SK-N-SH (cell line): ENCODE measurements at regions of chr5 and their contacts with region 1.

Region 1: DNA sequence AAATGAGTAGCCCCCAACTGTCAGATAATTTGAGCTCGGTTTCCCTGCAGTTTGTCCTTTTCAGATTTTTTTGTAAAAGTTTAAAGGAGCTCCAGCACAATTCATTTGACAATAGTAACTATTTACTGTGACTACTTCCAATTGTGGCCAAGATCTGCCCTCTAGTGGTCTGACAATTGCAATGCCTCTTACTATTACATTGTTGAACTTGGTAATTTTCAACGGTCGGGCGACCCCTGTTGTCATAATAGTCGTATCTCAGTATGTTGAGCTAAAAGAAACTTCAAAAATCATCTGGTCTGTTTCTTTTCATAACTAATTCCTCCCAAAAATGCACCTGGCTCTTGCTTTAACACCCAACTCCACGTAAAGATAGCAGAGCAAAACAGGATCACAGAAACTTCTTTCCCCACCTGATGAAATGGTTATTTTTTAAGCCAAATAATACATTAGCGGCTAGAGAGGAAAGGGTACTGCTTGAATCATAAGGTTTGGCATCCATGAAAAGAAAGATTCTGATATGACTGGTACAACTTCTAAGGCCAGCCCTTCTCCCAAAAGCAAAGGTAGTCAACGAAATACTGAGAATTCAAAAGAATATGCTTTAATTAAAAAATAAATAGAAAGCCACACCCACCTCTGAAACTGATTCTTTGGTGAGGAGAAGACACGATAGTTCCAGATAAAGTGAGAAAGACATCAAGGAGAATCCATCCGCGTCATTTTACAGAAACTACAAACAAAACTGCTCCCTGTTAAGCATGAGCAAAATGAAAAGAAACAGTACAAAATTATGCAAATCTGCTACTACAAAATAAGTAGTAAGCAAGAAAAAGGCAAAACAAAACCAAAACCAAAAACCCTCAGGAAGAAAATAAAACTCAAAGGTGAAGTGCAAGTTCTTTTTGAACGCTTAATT is 76.9 kb upstream of the HTR4 start:
- DNase-seq: peak; percentile 52
- H3K4me3 ChIP-seq: no peak overlapping the region; a peak in 1 of 4 replicates
- H3K27ac ChIP-seq: peak overlapping the region in 1 of 2 experiments; percentile 56; a peak in 2 of 4 replicates
- H3K4me1 ChIP-seq: peaks cover 0 to 15% of the 10 kb centered on the region in 2 experiments; a peak in 3 of 4 replicates
- H3K27me3 ChIP-seq: no peaks in the 10 kb centered on the region
- CTCF ChIP-seq: peak; percentile 99
- EP300 ChIP-seq: no peak
- RAD21 ChIP-seq: peak; percentile 99

Region 2: GRCh38 chr5:148166550-148167283 is 564.5 kb before region 1 on chr5:
- CTCF ChIA-PET with region 1: interaction called, 13 read pairs
- POLR2A ChIA-PET with region 1: no interaction called
- DNase-seq: no peak
- H3K4me3 ChIP-seq: no peak overlapping the region
- H3K27ac ChIP-seq: no peak overlapping the region
- H3K4me1 ChIP-seq: no peaks in the 10 kb centered on the region
- H3K27me3 ChIP-seq: no peaks in the 10 kb centered on the region
- CTCF ChIP-seq: no peak
- EP300 ChIP-seq: no peak
- RAD21 ChIP-seq: no peak

Region 3: DNA sequence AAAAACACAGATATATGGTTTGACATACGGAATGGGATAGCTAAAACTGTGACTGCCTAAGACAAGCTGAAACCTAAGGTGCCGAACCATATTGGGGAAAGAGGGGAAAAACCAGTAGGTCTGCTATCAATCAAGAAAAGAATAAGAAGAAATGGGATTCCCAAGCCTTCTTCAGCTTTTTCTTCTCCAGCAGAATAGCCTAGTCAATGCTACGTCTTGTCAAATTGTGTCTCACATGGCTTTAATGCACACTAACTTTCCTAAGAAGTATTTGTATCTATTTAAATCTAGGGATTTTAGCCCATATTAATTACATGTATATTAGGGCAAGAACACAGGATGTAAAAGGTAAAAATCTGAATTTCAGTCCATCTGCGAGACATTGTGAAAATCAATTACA is 348.2 kb before region 1 on chr5:
- CTCF ChIA-PET with region 1: interaction called, 18 read pairs
- POLR2A ChIA-PET with region 1: no interaction called
- DNase-seq: no peak
- H3K4me3 ChIP-seq: peak overlapping the region; percentile 87 to 95
- H3K27ac ChIP-seq: peak overlapping the region; percentile 72 to 82; a peak in 3 of 4 replicates
- H3K4me1 ChIP-seq: peaks cover 8 to 19% of the 10 kb centered on the region in 2 experiments; a peak in 3 of 4 replicates
- H3K27me3 ChIP-seq: no peaks in the 10 kb centered on the region
- CTCF ChIP-seq: no peak
- EP300 ChIP-seq: no peak
- RAD21 ChIP-seq: no peak

Region 4: GRCh38 chr5:148476302-148476701 is 254.9 kb before region 1 on chr5:
- CTCF ChIA-PET with region 1: interaction called, 14 read pairs
- POLR2A ChIA-PET with region 1: no interaction called
- DNase-seq: no peak
- H3K4me3 ChIP-seq: no peak overlapping the region
- H3K27ac ChIP-seq: no peak overlapping the region
- H3K4me1 ChIP-seq: no peaks in the 10 kb centered on the region
- H3K27me3 ChIP-seq: no peaks in the 10 kb centered on the region
- CTCF ChIP-seq: no peak
- EP300 ChIP-seq: no peak
- RAD21 ChIP-seq: no peak

Region 5: GRCh38 chr5:148632255-148633066 is 98.7 kb before region 1 on chr5:
- CTCF ChIA-PET with region 1: interaction called, 16 read pairs
- POLR2A ChIA-PET with region 1: no interaction called
- DNase-seq: no peak
- H3K4me3 ChIP-seq: no peak overlapping the region
- H3K27ac ChIP-seq: no peak overlapping the region
- H3K4me1 ChIP-seq: peaks cover 0 to 6% of the 10 kb centered on the region in 2 experiments; a peak in 2 of 4 replicates
- H3K27me3 ChIP-seq: no peaks in the 10 kb centered on the region
- CTCF ChIP-seq: no peak
- EP300 ChIP-seq: no peak
- RAD21 ChIP-seq: no peak

Region 6: DNA sequence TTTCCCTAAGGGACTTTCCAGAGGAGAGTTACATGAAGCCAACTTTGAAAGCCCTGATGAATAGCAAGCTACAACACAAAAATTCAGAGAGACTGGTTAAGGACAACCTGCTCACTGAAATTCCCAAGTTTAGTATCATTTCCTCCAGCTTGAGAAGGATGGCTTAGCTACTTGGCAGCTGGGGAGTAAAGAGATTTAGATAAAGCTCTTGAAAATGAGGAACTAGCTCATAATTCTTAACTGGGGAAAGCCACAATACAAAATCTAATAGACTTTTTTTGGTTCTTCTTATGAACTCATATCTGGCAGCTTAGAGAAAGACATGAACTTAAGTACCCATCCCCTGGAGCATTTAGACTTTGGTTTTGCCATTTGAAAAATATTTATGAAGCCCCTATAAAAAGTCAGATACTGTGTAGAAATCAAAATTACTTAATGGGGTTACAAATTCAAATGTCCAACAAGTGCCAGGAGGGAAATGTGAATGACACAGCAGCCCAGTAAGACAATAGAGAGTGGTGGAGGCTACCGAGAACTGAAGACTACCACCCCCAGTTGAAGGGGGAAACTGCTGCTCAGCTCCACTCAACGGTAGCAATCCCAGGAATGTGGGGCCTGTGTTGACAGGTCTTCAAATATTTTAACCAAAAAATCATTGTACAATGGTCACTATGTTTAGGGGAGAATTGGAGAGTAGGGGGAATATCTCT is 15.8 kb after region 1 on chr5:
- CTCF ChIA-PET with region 1: interaction called, 79 read pairs
- POLR2A ChIA-PET with region 1: no interaction called
- DNase-seq: no peak
- H3K4me3 ChIP-seq: no peak overlapping the region
- H3K27ac ChIP-seq: no peak overlapping the region
- H3K4me1 ChIP-seq: no peaks in the 10 kb centered on the region
- H3K27me3 ChIP-seq: no peaks in the 10 kb centered on the region
- CTCF ChIP-seq: no peak
- EP300 ChIP-seq: no peak
- RAD21 ChIP-seq: no peak

Region 7: GRCh38 chr5:148853868-148854267 is 122.7 kb after region 1 on chr5:
- CTCF ChIA-PET with region 1: no interaction called
- POLR2A ChIA-PET with region 1: no interaction called
- DNase-seq: no peak
- H3K4me3 ChIP-seq: no peak overlapping the region
- H3K27ac ChIP-seq: no peak overlapping the region
- H3K4me1 ChIP-seq: no peaks in the 10 kb centered on the region
- H3K27me3 ChIP-seq: no peaks in the 10 kb centered on the region
- CTCF ChIP-seq: no peak
- EP300 ChIP-seq: no peak
- RAD21 ChIP-seq: no peak

Region 8: DNA sequence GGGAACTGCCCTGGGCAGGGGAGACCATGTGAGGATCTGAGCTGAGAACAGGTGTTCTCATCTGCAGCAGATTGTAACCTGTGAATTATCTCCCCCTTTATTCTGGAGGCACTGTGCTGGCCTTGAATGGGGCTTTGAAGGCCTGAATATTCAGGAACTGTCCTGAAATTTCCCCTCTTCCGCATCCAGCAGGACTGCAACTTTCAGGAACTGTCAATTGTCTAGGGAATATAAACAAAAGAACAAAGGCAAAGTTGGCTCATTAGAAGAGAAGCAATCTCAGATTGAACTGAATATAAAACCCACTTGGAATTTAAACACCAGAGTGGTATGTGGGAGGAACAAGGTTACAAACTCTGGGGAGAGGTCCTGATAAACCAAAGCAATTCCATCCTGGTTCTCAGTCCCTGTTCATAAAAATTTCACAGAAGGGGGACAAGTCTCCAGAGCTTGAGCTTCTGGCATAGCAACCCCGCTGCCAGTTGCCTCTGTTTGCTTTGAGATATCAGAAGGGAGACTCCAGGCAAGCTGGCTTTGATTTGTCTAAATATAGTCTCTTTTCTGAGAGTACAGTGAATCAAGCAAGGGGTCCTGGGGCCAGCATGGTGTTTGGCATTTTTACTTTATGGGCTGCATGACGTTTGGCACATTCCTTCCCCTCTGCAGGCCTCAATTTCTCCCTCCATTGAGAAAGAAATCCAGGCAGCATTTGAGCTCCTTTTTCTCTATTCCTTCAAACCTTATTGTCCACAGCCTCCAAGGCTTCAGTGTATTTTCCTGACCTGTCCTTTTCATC is 142.7 kb after region 1 on chr5:
- CTCF ChIA-PET with region 1: no interaction called
- POLR2A ChIA-PET with region 1: no interaction called
- DNase-seq: no peak
- H3K4me3 ChIP-seq: no peak overlapping the region
- H3K27ac ChIP-seq: no peak overlapping the region
- H3K4me1 ChIP-seq: no peaks in the 10 kb centered on the region
- H3K27me3 ChIP-seq: no peaks in the 10 kb centered on the region
- CTCF ChIP-seq: no peak
- EP300 ChIP-seq: no peak
- RAD21 ChIP-seq: no peak

Region 9: GRCh38 chr5:149011074-149011476 is 279.9 kb after region 1 on chr5:
- CTCF ChIA-PET with region 1: interaction called, 14 read pairs
- POLR2A ChIA-PET with region 1: no interaction called
- DNase-seq: no peak
- H3K4me3 ChIP-seq: no peak overlapping the region
- H3K27ac ChIP-seq: no peak overlapping the region
- H3K4me1 ChIP-seq: peaks cover 0 to 2% of the 10 kb centered on the region in 2 experiments; a peak in 2 of 4 replicates
- H3K27me3 ChIP-seq: no peaks in the 10 kb centered on the region
- CTCF ChIP-seq: no peak
- EP300 ChIP-seq: no peak
- RAD21 ChIP-seq: no peak

Region 10: DNA sequence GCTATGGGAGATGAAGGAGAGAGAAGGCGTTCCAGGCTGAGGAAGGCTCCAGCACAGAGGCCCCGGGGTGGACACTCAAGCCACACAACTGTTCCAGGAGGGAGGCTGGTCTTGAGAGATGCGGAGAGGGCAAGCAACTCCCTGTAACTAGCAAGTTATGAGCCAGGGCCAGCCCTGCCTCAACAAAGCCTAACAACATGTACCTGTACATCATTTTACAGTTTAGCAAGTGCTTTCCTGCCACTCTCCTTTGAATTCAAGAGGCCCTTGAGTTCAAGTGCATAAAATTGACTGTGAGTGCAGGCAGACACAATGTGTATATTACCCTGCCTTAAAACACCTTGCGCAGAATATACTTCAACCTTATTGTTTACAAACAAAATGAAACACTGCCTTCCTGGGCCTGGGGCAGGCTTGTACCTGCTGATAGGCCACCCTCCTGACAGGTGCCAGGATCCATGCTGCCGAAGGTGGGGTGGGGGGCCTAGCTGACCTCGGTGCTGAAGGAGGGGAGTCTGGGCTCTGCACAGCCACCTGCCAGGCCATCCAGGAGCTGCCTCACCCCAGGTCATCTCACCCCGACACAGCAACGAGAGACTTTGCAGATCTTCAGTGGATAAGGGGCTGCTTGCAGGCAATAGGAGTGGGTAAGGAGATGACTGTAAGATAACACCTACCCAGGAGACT is 1078.9 kb after region 1 on chr5:
- CTCF ChIA-PET with region 1: no interaction called
- POLR2A ChIA-PET with region 1: no interaction called
- DNase-seq: no peak
- H3K4me3 ChIP-seq: no peak overlapping the region
- H3K27ac ChIP-seq: no peak overlapping the region
- H3K4me1 ChIP-seq: peaks cover 6 to 13% of the 10 kb centered on the region in 2 experiments; a peak in 2 of 4 replicates
- H3K27me3 ChIP-seq: no peaks in the 10 kb centered on the region
- CTCF ChIP-seq: no peak
- EP300 ChIP-seq: no peak
- RAD21 ChIP-seq: no peak